OCI-LY7 (cell line): ENCODE measurements at regions of chr17 and their contacts with region 1.

Region 1: DNA sequence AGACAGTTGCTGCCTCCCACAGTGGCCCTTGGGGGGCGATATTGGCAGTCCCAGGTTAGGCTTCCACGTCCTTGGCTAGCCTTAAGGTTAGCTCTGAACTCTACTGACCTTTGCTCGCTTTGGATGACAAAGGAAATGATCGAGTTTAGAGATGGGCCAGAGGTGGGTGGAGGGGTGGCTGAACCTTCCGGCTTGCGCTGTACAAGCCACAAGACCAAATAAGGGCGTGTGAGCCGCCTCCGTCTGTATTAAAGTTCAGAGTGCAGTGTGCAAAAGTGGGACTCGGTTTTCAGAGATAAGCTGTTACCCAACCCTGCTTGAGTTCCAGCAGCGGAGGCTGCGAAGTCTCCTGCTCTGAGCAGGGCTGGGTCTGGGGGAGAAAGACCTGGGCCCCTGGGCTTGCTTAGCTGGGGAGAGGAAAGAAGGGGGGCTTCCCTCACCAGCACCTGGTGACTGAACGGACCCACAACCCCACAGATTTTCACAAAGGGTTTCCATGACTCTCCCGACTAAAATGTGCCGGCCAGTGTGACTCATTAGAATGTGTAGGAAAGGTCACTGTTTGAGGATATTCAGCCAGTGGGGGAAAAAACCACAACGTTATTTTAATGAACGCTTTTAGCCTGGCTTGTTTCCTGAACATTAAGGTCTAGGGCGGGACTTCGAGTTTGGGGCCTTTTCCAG is 67.2 kb downstream of the CENPV start:
- DNase-seq: peak; percentile 67
- H3K4me3 ChIP-seq: peak overlapping the region; percentile 51
- H3K27ac ChIP-seq: peak overlapping the region; percentile 82
- H3K4me1 ChIP-seq: peaks cover 55% of the 10 kb centered on the region
- CTCF ChIP-seq: peak; percentile 86

Region 2: GRCh38 chr17:16215273-16215964 is 70.7 kb before region 1 on chr17 and contains the start of gene NCOR1:
- CTCF ChIA-PET with region 1: no interaction called
- POLR2A ChIA-PET with region 1: interaction called, 5 read pairs
- intact Hi-C with region 1: loop called (anchors 5 kb)
- DNase-seq: peak; percentile 93
- H3K4me3 ChIP-seq: peak within 1 kb of the TSS; percentile 75
- H3K27ac ChIP-seq: peak within 1 kb of the TSS; percentile 87
- H3K4me1 ChIP-seq: peaks cover 20% of the 10 kb centered on the region
- CTCF ChIP-seq: peak; percentile 50
- total RNA-seq, gene NCOR1: 68.0 and 80.6 TPM in 2 replicates